ENCODE measurements at regions of chr1 and their contacts with region 1.

Region 1: GRCh38 chr1:203172128-203173010 is 3.3 kb downstream of the MYBPH start:
- DNase-seq: peak; percentile 48 to 78 (median 63)
- ATAC-seq: peak; percentile 60 to 82 (median 68)
- H3K4me3 ChIP-seq: no peak overlapping the region
- H3K27ac ChIP-seq: no peak overlapping the region
- H3K4me1 ChIP-seq: peaks cover 0 to 15% (median 0%) of the 10 kb centered on the region in 12 donors
- H3K27me3 ChIP-seq: no peaks in the 10 kb centered on the region
- CTCF ChIP-seq: peak; percentile 71 to 87 (median 78)
- POLR2A ChIP-seq: no peak

Region 2: GRCh38 chr1:202728951-202729350 is 443.4 kb before region 1 on chr1:
- intact Hi-C with region 1: no loop called
- DNase-seq: no peak
- ATAC-seq: no peak
- H3K4me3 ChIP-seq: no peak overlapping the region
- H3K27ac ChIP-seq: no peak overlapping the region
- H3K4me1 ChIP-seq: no peaks in the 10 kb centered on the region
- H3K27me3 ChIP-seq: no peaks in the 10 kb centered on the region
- CTCF ChIP-seq: no peak
- POLR2A ChIP-seq: no peak

Region 3: GRCh38 chr1:203117611-203118575 is 54.5 kb before region 1 on chr1:
- intact Hi-C with region 1: loop called in 9 of 10 experiments (anchors 1 to 5 kb)
- DNase-seq: peak; percentile 74 to 87 (median 80)
- ATAC-seq: peak; percentile 83 to 97 (median 94)
- H3K4me3 ChIP-seq: no peak overlapping the region
- H3K27ac ChIP-seq: no peak overlapping the region
- H3K4me1 ChIP-seq: peaks cover 0 to 11% (median 3%) of the 10 kb centered on the region in 12 donors
- H3K27me3 ChIP-seq: peaks cover 0 to 54% (median 12%) of the 10 kb centered on the region in 9 donors
- CTCF ChIP-seq: peak; percentile 61 to 83 (median 78)
- POLR2A ChIP-seq: no peak

Region 4: GRCh38 chr1:203663294-203663693 is 490.9 kb after region 1 on chr1:
- intact Hi-C with region 1: no loop called
- DNase-seq: no peak
- ATAC-seq: peak; percentile 16 to 64 (median 52)
- H3K4me3 ChIP-seq: no peak overlapping the region
- H3K27ac ChIP-seq: peak overlapping the region; percentile 5 to 87 (median 60)
- H3K4me1 ChIP-seq: peaks cover 14 to 90% (median 75%) of the 10 kb centered on the region in 12 donors
- H3K27me3 ChIP-seq: no peaks in the 10 kb centered on the region
- CTCF ChIP-seq: no peak
- POLR2A ChIP-seq: no peak

Measured in heart left ventricle (tissue), 16 donors.